Colonic mucosa (tissue), 4 donors: ENCODE measurements at regions of chr2 and their contacts with region 1.

Region 1: GRCh38 chr2:37005118-37005868 is 39.0 kb upstream of the STRN start:
- DNase-seq: peak; percentile 47
- H3K4me3 ChIP-seq: no peak overlapping the region
- H3K27ac ChIP-seq: no peak overlapping the region
- H3K4me1 ChIP-seq: no peaks in the 10 kb centered on the region
- H3K27me3 ChIP-seq: no peaks in the 10 kb centered on the region
- CTCF ChIP-seq: peak; percentile 38

Region 2: GRCh38 chr2:36780231-36780839 is 225.0 kb before region 1 on chr2:
- intact Hi-C with region 1: loop called (anchors 5 kb)
- DNase-seq: no peak
- H3K4me3 ChIP-seq: no peak overlapping the region
- H3K27ac ChIP-seq: no peak overlapping the region
- H3K4me1 ChIP-seq: no peaks in the 10 kb centered on the region
- H3K27me3 ChIP-seq: no peaks in the 10 kb centered on the region
- CTCF ChIP-seq: peak; percentile 86

Region 3: GRCh38 chr2:36858551-36859365 is 146.5 kb before region 1 on chr2:
- intact Hi-C with region 1: loop called (anchors 10 kb)
- DNase-seq: no peak
- H3K4me3 ChIP-seq: no peak overlapping the region
- H3K27ac ChIP-seq: peak overlapping the region; percentile 41
- H3K4me1 ChIP-seq: no peaks in the 10 kb centered on the region
- H3K27me3 ChIP-seq: no peaks in the 10 kb centered on the region
- CTCF ChIP-seq: no peak

Region 4: DNA sequence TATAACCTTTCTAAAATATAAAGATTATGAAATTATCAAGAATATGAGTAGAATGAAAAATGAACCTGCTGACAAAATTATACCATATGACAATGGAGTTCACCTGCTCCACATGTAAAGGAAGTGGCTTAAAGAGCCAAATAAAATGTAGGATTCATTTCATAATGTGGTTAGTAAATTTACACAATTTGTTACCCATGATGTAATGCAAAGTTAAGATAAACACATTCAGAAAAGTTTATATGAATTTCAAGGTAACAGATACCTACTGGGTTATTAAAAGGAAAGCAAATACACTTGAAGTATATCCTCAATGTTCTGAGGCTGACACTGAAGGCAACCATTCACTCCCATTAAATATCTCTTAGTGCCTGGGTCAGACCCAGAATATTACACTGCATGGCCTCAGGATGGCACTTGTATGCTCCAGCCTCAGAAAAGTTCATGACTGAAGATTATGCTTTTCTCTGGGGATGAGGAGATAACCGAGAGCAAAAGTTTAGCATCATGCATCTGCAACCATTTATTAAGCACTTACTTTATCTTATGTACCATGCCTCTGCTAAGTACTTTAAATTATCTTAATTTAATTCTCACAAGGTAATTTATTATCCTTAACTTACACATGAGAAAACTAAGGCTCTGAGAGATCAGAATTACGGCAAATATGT is 45.2 kb before region 1 on chr2:
- intact Hi-C with region 1: no loop called
- DNase-seq: no peak
- H3K4me3 ChIP-seq: no peak overlapping the region
- H3K27ac ChIP-seq: no peak overlapping the region
- H3K4me1 ChIP-seq: no peaks in the 10 kb centered on the region
- H3K27me3 ChIP-seq: no peaks in the 10 kb centered on the region
- CTCF ChIP-seq: no peak